ENCODE measurements at regions of chr13 and their contacts with region 1.

Region 1: DNA sequence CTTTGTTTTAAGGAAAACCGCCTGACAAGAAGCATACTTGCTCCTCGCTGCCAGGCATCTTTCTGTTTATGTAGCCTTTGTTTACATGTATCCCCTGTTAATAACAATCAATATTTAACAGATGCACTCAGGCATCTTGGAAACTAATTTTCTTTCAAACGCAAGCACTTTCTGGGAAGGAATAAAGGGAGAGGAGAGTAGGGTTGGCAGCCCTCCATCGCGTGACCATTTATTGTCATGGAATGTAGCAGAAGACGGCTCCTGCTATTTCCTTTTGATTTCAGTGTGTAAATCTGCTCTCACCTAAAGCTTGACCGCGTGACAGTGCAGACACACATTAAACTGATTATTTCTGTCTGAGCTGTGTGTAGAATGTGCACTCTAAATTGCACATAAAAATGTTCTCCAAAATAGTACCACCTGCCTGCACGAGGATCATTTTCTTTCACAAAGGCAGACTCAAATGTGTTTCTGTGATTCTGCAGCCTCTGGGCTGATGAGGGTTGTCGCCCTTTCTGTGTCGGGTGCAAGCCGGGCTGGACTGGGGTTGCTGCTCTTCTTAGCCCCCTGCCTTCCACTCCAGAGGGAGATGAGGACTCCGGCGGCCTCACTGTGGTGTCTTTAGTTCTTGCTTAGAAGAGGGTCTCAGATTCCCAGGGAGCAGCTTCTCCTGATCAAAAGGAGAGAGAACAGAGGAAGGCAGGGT is 223.5 kb upstream of the MAB21L1 start:
- DNase-seq: no peak
- H3K4me3 ChIP-seq: peak overlapping the region; percentile 9 to 23
- H3K27ac ChIP-seq: peak overlapping the region; percentile 51
- H3K4me1 ChIP-seq: peaks cover 6% of the 10 kb centered on the region
- H3K27me3 ChIP-seq: no peaks in the 10 kb centered on the region
- CTCF ChIP-seq: no peak
- POLR2A ChIP-seq: no peak

Region 2: DNA sequence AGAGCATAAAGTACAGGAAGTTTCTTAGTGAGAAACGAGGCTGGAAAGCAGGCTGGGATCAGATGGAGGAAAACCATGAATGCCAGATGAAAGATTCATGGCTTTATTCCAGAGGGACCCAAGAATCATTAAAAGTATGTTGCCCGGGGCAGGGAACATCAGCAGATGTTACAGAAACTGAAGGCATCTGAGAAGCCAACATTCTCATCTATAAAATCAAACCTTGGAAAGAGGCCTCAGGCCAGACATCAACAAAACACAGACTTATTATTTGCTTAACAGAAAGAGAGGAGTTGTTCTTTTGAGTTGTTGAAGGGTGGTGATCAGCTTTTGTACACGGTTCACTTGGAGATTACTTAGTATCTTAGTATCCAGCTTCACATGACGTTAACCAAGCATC is 1338.4 kb before region 1 on chr13:
- intact Hi-C with region 1: loop called (anchors 5 kb)
- DNase-seq: no peak
- H3K4me3 ChIP-seq: no peak overlapping the region
- H3K27ac ChIP-seq: no peak overlapping the region
- H3K4me1 ChIP-seq: no peaks in the 10 kb centered on the region
- H3K27me3 ChIP-seq: no peaks in the 10 kb centered on the region
- CTCF ChIP-seq: no peak
- POLR2A ChIP-seq: no peak

Measured in vagina (tissue), 2 donors.